Ascending aorta (tissue), 2 donors: ENCODE measurements at regions of chr2 and their contacts with region 1.

Region 1: GRCh38 chr2:84970868-84971509 is at the start of gene KCMF1:
- DNase-seq: peak in 1 of 2 donors; percentile 77
- H3K4me3 ChIP-seq: peak within 1 kb of the TSS; percentile 90 to 99
- H3K27ac ChIP-seq: peak within 1 kb of the TSS; percentile 94 to 99
- H3K4me1 ChIP-seq: peaks cover 9 to 22% of the 10 kb centered on the region in 2 donors
- H3K27me3 ChIP-seq: no peaks in the 10 kb centered on the region
- CTCF ChIP-seq: no peak
- total RNA-seq, gene KCMF1: 14.4 TPM

Region 2: DNA sequence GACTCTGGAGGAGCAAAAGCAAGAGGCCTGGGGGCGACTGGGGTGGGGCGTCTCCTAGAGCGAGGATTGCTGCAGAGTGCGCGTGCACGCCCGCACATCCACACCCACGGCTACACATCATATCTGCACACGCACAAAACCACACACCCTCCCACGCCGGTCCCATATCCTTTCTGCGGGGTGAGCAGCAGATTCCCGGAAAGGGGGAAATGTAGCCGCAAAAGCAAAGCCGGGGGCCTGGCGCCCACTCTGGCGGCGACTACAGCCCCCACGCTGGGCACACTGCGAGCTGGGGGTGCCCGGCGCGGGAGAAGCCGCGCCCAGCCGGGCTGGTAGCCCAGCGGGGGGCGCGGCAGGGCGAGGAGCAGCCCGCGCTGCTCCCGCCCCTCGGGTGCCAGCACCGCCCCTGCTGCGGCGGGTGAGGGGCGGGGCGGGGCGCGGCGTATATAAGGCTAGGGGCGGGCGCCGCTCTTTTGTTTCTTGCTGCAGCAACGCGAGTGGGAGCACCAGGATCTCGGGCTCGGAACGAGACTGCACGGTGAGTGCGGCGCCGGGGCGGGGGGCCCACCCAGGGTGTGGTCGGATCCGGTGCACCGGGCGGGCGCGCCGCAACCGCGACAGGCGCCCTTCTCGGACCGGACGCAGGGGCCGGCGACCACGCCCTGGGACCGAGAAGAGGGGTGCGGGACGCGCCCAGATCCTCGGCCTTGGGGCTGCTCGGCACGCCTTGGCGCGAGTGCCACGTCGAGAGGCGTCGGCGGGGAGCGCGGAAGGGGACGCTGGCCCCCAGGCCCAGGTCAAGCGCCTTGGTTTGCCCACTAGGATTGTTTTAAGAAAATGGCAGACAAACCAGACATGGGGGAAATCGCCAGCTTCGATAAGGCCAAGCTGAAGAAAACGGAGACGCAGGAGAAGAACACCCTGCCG is 65.5 kb before region 1 on chr2 and contains the start of gene TMSB10:
- intact Hi-C with region 1: loop called (anchors 5 kb)
- DNase-seq: peak in 1 of 2 donors; percentile 92
- H3K4me3 ChIP-seq: peak within 1 kb of the TSS; percentile 85 to 98
- H3K27ac ChIP-seq: peak within 1 kb of the TSS; percentile 90 to 94
- H3K4me1 ChIP-seq: peaks cover 0 to 7% of the 10 kb centered on the region in 2 donors
- H3K27me3 ChIP-seq: no peaks in the 10 kb centered on the region
- CTCF ChIP-seq: peak in 1 of 3 experiments; percentile 5
- total RNA-seq, gene TMSB10: 5,452 TPM

Region 3: DNA sequence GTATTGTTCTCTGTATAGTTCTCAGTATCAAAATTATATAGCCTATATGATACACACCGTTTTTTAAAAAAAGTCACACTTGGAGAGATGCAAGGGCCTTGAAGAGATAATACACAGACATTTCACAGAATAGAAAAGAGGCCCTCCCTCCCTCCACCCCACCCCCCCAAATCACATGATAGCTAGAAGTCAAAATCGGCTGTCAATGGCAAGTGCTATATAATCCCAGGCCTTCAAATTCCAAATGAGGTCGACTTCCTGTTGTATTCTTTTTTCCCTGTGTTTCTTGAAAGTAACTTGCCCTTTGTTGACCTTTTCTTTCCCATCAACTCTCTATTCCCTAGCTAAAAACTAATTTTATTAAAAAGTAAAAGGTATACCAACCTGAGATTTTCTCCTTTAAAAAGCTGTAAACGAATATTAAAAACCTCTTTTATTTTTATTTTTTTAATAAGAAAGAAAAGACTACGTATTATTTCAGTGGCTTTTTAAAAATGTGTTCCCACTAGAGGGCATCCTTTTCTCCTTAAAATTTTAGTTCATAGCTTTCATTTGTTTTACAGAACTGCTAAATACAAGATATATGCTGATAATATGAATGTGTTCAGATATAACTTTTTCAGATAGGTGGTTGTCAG is 46.5 kb after region 1 on chr2:
- intact Hi-C with region 1: loop called (anchors 2 kb)
- DNase-seq: no peak
- H3K4me3 ChIP-seq: no peak overlapping the region
- H3K27ac ChIP-seq: no peak overlapping the region
- H3K4me1 ChIP-seq: peaks cover 0 to 29% of the 10 kb centered on the region in 2 donors
- H3K27me3 ChIP-seq: no peaks in the 10 kb centered on the region
- CTCF ChIP-seq: peak in 1 of 3 experiments; percentile 34